Activated naive CD4-positive, alpha-beta T cell treated with anti-CD3 and anti-CD28 coated beads for 36 hours (primary cell): ENCODE measurements at regions of chr4 and their contacts with region 1.

Region 1: GRCh38 chr4:152640058-152640833 is 39.6 kb downstream of the TMEM154 start:
- DNase-seq: no peak
- H3K4me3 Mint-ChIP-seq: no peak overlapping the region
- H3K27ac Mint-ChIP-seq: no peak overlapping the region
- H3K4me1 Mint-ChIP-seq: peaks cover 30% of the 10 kb centered on the region
- H3K27me3 Mint-ChIP-seq: no peaks in the 10 kb centered on the region

Region 2: DNA sequence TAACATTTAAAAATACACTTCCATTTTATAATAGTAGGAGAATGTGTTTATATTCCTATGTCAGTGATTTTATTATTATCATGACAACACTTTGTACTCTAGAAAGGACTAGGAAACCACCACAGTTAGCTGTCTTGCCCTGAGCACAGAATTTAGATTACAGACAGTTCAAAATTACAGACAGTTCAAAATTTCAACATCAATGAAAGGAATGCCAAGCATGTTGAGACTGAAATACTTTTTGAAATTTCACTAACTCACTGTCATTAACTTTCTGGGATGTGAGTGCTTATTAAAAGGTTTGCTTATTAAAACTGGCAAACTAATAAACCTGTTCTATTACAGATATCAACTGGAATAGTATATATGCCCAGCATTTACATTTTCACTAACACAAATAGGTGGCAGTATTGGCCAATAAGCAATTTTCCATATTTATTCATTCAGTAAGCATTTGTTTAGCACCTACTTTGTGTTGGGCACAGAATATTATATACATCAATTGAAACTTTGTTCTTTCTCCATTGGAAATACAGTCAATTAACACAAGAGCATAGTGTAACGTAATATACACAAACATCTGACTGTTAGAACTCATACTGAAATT is 283.7 kb before region 1 on chr4:
- CTCF ChIA-PET with region 1: no interaction called
- intact Hi-C with region 1: loop called (anchors 5 kb)
- DNase-seq: no peak
- H3K4me3 Mint-ChIP-seq: no peak overlapping the region
- H3K27ac Mint-ChIP-seq: no peak overlapping the region
- H3K4me1 Mint-ChIP-seq: peaks cover 31% of the 10 kb centered on the region
- H3K27me3 Mint-ChIP-seq: no peaks in the 10 kb centered on the region

Region 3: GRCh38 chr4:152408514-152409327 is 231.5 kb before region 1 on chr4:
- CTCF ChIA-PET with region 1: interaction called, 5 read pairs
- intact Hi-C with region 1: loop called (anchors 1 kb)
- DNase-seq: peak; percentile 35
- H3K4me3 Mint-ChIP-seq: no peak overlapping the region
- H3K27ac Mint-ChIP-seq: no peak overlapping the region
- H3K4me1 Mint-ChIP-seq: peaks cover 7% of the 10 kb centered on the region
- H3K27me3 Mint-ChIP-seq: no peaks in the 10 kb centered on the region

Region 4: DNA sequence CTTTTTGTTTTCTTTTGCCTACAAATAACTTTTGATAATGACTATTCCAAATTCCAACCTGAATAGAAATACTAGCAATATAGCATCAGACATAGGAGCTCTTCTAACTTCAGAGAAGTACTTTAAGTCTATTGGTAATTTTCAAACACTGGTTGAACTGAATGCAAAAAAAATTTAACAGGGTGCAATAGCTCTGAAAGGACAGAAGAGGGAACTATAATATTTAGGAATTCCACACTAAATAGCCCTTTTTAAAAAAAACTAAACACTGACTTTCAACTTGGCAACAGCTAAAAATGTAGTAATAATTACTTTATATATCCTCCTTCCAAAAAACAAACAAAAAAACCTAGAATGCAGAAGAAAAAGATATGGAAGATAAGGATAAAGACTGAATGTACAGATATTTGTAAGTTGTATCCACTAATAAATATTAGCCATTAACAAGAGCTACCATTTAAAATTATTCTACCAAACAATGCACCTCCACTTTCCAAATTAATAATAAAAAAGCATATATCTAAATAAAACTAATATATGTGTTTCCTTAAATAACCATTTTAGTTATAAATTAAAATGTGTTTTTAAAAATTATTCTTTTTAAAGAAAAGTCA is 185.7 kb before region 1 on chr4:
- CTCF ChIA-PET with region 1: interaction called, 7 read pairs
- intact Hi-C with region 1: loop called (anchors 1 kb)
- DNase-seq: no peak
- H3K4me3 Mint-ChIP-seq: no peak overlapping the region
- H3K27ac Mint-ChIP-seq: no peak overlapping the region
- H3K4me1 Mint-ChIP-seq: peaks cover 32% of the 10 kb centered on the region
- H3K27me3 Mint-ChIP-seq: no peaks in the 10 kb centered on the region

Region 5: GRCh38 chr4:152559641-152560040 is 80.6 kb before region 1 on chr4:
- CTCF ChIA-PET with region 1: interaction called, 11 read pairs
- intact Hi-C with region 1: no loop called
- DNase-seq: no peak
- H3K4me3 Mint-ChIP-seq: no peak overlapping the region
- H3K27ac Mint-ChIP-seq: no peak overlapping the region
- H3K4me1 Mint-ChIP-seq: peaks cover 15% of the 10 kb centered on the region
- H3K27me3 Mint-ChIP-seq: no peaks in the 10 kb centered on the region

Region 6: DNA sequence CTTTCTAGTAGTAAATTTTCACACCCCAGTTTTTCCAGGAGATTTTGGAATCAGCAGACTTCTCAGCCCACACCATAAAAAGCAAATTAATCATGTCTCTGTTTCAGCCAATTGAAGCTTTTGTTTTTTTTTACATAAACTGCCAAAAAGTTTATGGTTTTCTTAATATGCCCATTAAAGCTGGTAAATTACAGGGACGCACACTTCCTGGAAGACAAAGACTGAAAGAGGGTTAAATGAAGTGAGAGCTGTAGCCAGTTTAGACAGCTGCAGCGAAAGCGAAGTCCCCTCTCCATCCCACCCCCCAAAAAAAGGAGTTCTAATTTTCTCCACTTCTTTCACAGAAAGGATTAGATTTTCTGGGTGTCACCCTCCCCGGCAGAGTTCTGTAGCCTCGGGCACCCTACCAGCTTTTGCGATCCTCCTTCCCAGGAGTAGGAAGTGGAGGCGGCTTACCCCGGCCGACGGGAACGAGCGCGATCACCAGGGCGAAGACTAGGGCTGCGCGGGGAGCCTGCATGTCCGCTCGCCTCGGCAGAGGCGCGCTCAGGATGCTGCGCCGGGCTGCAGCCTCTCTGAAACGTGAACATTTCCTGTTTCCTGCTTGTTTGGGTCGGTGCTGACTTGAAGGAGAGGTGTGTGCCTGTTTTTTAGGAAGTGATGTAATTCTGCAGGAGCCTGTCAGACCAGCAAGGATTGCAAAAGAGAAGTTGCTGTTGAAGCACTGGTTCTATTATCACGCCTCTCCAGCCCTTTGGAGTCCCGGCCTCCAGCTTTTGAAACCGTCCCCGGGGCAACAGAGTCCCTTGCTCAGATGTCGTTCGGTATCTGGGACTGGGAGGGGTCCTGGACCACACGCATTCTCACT is 39.4 kb after region 1 on chr4 and contains the start of gene TMEM154:
- CTCF ChIA-PET with region 1: interaction called, 7 read pairs
- intact Hi-C with region 1: loop called (anchors 2 kb)
- DNase-seq: peak; percentile 83
- H3K4me3 Mint-ChIP-seq: peak within 1 kb of the TSS; percentile 87
- H3K27ac Mint-ChIP-seq: peak within 1 kb of the TSS; percentile 85
- H3K4me1 Mint-ChIP-seq: peaks cover 59% of the 10 kb centered on the region
- H3K27me3 Mint-ChIP-seq: no peaks in the 10 kb centered on the region
- total RNA-seq, gene TMEM154: 17.3 to 20.4 TPM

Region 7: DNA sequence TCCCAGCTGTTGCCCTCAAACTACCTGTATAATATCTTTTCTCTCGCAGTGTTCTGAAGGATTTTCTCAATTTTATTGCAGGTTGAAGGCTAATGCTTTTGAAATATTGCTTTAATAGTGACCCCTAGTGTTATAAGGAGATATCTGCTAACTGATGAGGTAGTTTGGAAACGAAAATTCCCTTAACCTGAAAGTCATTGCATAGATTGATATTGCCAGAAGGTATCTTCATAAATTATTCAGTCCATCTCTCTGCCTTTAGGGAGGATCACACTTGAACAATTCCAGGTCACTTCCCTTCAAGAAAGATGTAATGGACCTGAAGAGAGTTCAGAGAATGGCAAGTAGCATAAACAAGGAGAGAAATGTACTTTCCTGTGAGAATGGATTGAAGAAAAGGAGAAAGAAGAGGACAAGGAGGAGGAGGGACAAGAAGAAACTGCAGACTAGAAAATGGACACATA is 95.2 kb after region 1 on chr4:
- CTCF ChIA-PET with region 1: interaction called, 5 read pairs
- intact Hi-C with region 1: loop called (anchors 2 kb)
- DNase-seq: no peak
- H3K4me3 Mint-ChIP-seq: no peak overlapping the region
- H3K27ac Mint-ChIP-seq: no peak overlapping the region
- H3K4me1 Mint-ChIP-seq: no peaks in the 10 kb centered on the region
- H3K27me3 Mint-ChIP-seq: peaks cover 3% of the 10 kb centered on the region

Region 8: DNA sequence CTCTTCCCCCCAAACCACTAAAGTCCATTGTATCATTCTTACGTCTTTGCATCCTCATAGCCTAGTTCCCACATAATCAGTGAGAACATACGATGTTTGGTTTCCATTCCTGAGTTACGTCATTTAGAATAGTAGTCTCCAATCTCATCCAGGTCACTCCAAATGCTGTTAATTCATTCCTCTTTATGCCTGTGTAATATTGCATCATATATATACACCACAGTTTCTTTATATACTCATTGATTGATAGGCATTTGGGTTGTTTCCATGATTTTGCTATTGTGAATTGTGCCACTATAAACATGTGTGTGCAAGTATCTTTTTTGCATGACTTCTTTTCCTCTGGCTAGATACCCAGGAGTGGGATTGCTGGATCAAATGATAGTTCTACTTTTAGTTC is 196.7 kb after region 1 on chr4:
- CTCF ChIA-PET with region 1: no interaction called
- intact Hi-C with region 1: no loop called
- DNase-seq: no peak
- H3K4me3 Mint-ChIP-seq: no peak overlapping the region
- H3K27ac Mint-ChIP-seq: no peak overlapping the region
- H3K4me1 Mint-ChIP-seq: peaks cover 16% of the 10 kb centered on the region
- H3K27me3 Mint-ChIP-seq: no peaks in the 10 kb centered on the region